ENCODE measurements at regions of chr7 and their contacts with region 1.

Region 1: DNA sequence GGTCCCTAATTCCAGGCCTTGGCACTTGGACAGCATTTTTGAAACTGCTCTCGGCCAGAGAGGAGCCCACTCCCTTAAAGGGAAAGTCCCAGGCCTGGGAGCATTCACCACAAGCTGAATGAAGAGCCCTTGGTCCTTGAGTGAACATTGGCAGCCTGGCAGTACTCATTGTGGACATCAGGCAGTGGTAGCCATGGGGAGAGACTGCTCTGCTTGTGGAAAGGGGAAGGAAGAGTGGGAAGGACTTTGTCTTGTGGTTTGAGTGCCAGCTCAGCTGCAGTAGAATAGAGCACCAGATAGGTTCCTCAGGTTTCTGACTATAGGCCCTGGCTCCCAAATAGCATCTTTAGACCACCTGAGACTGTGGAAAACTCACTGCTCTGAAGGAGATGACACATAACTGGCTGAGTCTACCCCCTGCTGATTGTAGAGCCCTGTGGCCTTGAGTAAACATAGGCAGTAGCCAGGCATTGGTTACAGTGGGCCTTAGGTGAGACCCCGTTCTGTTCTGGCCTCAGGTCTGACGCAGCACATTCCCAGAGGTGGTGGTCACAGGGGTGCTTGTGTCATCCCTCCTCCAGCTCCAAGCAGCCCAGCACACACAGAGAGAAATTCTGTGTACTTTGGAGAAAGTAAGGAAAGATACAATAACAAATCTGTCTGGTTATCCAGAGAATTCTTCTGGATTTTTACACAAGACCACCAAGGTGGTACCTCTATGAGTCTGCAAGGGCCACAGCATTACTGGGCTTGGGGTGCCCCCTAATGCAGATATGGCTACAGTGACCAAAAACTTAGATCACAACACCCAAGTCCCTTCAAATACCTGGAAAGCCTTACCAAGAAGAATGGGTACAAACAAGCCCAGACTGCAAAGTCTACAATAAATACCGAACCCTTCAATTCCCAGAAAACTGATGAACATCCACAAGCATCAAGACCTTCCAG is 153.8 kb downstream of the GNAI1 start:
- DNase-seq: no peak
- H3K4me3 ChIP-seq: no peak overlapping the region
- H3K4me3 Mint-ChIP-seq: no peak overlapping the region
- H3K27ac Mint-ChIP-seq: no peak overlapping the region
- H3K4me1 ChIP-seq: no peaks in the 10 kb centered on the region
- H3K4me1 Mint-ChIP-seq: no peaks in the 10 kb centered on the region
- H3K27me3 ChIP-seq: no peaks in the 10 kb centered on the region
- H3K27me3 Mint-ChIP-seq: peaks cover 9% of the 10 kb centered on the region
- CTCF ChIP-seq: no peak

Region 2: GRCh38 chr7:80060218-80060806 is 228.1 kb before region 1 on chr7:
- CTCF ChIA-PET with region 1: no interaction called
- POLR2A ChIA-PET with region 1: no interaction called
- intact Hi-C with region 1: loop called (anchors 1 kb)
- DNase-seq: peak in 1 of 2 experiments; percentile 24
- H3K4me3 ChIP-seq: no peak overlapping the region
- H3K4me3 Mint-ChIP-seq: no peak overlapping the region
- H3K27ac Mint-ChIP-seq: no peak overlapping the region
- H3K4me1 ChIP-seq: no peaks in the 10 kb centered on the region; the same call in 1 of the 2 replicates
- H3K4me1 Mint-ChIP-seq: no peaks in the 10 kb centered on the region
- H3K27me3 ChIP-seq: no peaks in the 10 kb centered on the region
- H3K27me3 Mint-ChIP-seq: peaks cover 6% of the 10 kb centered on the region
- CTCF ChIP-seq: peak; percentile 31 to 43

Region 3: DNA sequence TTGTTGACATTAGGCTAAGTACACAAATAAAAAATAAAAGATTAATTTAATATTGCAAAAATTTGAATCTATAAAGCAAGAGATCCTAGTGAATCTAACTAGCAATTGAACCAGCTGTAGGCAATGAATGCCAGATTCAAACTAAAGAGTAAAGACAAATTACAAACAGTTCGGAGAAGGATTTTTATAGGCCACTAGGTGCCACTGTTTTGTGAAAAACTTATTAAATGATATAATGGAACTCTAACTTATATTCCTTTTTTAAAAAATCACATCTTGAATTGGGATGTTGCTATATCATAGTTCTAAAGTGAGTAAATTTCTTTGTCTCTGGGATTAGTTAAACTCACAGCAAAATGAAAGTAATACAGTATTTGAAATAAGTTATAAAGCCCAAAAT is 192.9 kb before region 1 on chr7:
- CTCF ChIA-PET with region 1: no interaction called
- POLR2A ChIA-PET with region 1: no interaction called
- intact Hi-C with region 1: loop called (anchors 1 kb)
- DNase-seq: no peak
- H3K4me3 ChIP-seq: no peak overlapping the region
- H3K4me3 Mint-ChIP-seq: no peak overlapping the region
- H3K27ac Mint-ChIP-seq: no peak overlapping the region
- H3K4me1 ChIP-seq: no peaks in the 10 kb centered on the region
- H3K4me1 Mint-ChIP-seq: no peaks in the 10 kb centered on the region
- H3K27me3 ChIP-seq: no peaks in the 10 kb centered on the region
- H3K27me3 Mint-ChIP-seq: no peaks in the 10 kb centered on the region
- CTCF ChIP-seq: peak; percentile 20 to 30

Region 4: DNA sequence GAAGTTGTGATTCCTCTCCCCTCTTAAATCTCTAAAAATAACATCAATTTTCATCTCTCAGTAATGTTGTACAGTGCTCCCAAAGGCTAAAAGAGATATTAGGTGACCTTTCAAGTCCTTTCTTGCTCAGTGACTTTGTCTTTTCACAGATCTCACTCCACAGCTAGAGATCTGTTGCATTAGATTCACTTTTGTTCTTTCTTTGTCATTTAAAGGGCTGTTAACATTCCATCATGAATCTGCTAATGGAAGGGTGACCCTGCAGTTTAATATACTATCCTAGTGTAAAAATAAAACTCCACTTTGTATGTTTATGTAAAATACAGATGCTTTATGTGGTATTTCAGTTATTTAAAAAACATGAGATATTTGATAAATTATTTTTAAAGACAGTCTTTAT is 123.3 kb before region 1 on chr7:
- CTCF ChIA-PET with region 1: no interaction called
- POLR2A ChIA-PET with region 1: no interaction called
- intact Hi-C with region 1: no loop called
- DNase-seq: no peak
- H3K4me3 ChIP-seq: no peak overlapping the region
- H3K4me3 Mint-ChIP-seq: no peak overlapping the region
- H3K27ac Mint-ChIP-seq: no peak overlapping the region
- H3K4me1 ChIP-seq: no peaks in the 10 kb centered on the region
- H3K4me1 Mint-ChIP-seq: no peaks in the 10 kb centered on the region
- H3K27me3 ChIP-seq: no peaks in the 10 kb centered on the region
- H3K27me3 Mint-ChIP-seq: no peaks in the 10 kb centered on the region
- CTCF ChIP-seq: no peak